Activated CD4-positive, alpha-beta T cell treated with anti-CD3 and anti-CD28 coated beads for 36 hours (primary cell): ENCODE measurements at regions of chr22 and their contacts with region 1.

Region 1: GRCh38 chr22:22588485-22589164 is 29.6 kb upstream of the PRAME start:
- DNase-seq: no peak
- ATAC-seq: no peak
- H3K4me3 Mint-ChIP-seq: no peak overlapping the region
- H3K27ac Mint-ChIP-seq: no peak overlapping the region
- H3K4me1 Mint-ChIP-seq: no peaks in the 10 kb centered on the region
- H3K27me3 Mint-ChIP-seq: peaks cover 10% of the 10 kb centered on the region

Region 2: DNA sequence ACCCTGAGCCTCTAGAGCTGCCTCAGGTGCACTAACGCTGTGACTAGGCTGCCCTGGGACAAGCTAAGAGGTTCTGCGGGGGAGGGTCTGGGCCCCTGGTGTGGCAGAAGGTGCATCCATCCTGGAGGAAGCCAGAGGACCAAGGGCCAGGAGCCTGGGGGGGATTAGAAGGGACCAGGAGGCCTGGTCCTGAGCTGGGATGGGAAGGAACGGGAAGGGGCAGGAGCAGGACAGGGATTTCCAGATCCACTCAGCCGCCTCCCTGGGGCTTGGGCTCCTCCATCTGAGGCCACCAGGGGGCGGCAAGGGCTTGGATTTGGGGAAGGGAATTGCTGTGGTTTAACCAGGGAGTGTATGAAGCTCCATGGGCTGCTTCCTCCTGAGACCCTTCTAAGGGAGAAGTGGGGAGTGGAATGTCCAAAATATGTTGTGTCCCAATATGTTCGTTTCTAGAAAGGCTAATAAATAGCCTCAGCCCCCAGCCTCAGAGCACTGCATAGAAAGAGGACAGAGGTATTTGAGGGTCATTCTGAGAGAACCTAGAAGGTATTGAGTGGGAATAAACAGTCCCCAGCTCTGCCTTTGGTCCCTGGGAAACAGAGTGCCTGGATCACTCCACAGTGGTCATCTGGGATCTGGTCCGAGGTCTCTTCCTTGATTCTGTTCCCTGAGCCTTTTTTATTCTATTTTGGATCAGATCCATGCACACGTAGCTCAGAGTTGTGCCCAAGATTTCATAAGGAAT is 12.2 kb before region 1 on chr22:
- CTCF ChIA-PET with region 1: interaction called, 40 read pairs
- POLR2A ChIA-PET with region 1: no interaction called
- intact Hi-C with region 1: no loop called
- DNase-seq: peak; percentile 63
- ATAC-seq: no peak
- H3K4me3 Mint-ChIP-seq: no peak overlapping the region
- H3K27ac Mint-ChIP-seq: no peak overlapping the region
- H3K4me1 Mint-ChIP-seq: no peaks in the 10 kb centered on the region
- H3K27me3 Mint-ChIP-seq: peaks cover 4% of the 10 kb centered on the region